HepG2 (cell line): ENCODE measurements at regions of chr9 and their contacts with region 1.

Region 1: GRCh38 chr9:35829084-35829763 is at the start of gene TMEM8B:
- DNase-seq: peak; percentile 83
- ATAC-seq: peak; percentile 90
- H3K4me3 ChIP-seq: peak within 1 kb of the TSS; percentile 61 to 81 (median 73)
- H3K27ac ChIP-seq: peak within 1 kb of the TSS; percentile 44
- H3K4me1 ChIP-seq: peaks cover 45% of the 10 kb centered on the region
- H3K27me3 ChIP-seq: no peaks in the 10 kb centered on the region
- CTCF ChIP-seq: no peak
- EP300 ChIP-seq: no peak
- POLR2A ChIP-seq: no peak
- RAD21 ChIP-seq: no peak
- total RNA-seq, gene TMEM8B: 1.5 and 2.1 TPM in 2 replicates

Region 2: GRCh38 chr9:35790385-35791296 is 38.6 kb before region 1 on chr9:
- CTCF ChIA-PET with region 1: interaction called, 12 read pairs
- POLR2A ChIA-PET with region 1: no interaction called
- in situ Hi-C with region 1: no loop called
- intact Hi-C with region 1: loop called (anchors 2 kb)
- DNase-seq: peak; percentile 49
- ATAC-seq: peak; percentile 94
- H3K4me3 ChIP-seq: no peak overlapping the region
- H3K27ac ChIP-seq: no peak overlapping the region
- H3K4me1 ChIP-seq: no peaks in the 10 kb centered on the region; the same call in 1 of the 2 replicates
- H3K27me3 ChIP-seq: no peaks in the 10 kb centered on the region
- CTCF ChIP-seq: peak; percentile 94
- EP300 ChIP-seq: no peak
- POLR2A ChIP-seq: no peak
- RAD21 ChIP-seq: peak; percentile 82

Region 3: GRCh38 chr9:35891646-35892045 is 62.4 kb after region 1 on chr9:
- CTCF ChIA-PET with region 1: no interaction called
- POLR2A ChIA-PET with region 1: no interaction called
- in situ Hi-C with region 1: no loop called
- intact Hi-C with region 1: no loop called
- DNase-seq: no peak
- ATAC-seq: no peak
- H3K4me3 ChIP-seq: no peak overlapping the region
- H3K27ac ChIP-seq: no peak overlapping the region
- H3K4me1 ChIP-seq: no peaks in the 10 kb centered on the region
- H3K27me3 ChIP-seq: peaks cover 0 to 4% of the 10 kb centered on the region in 2 experiments; a peak in 1 of 5 replicates
- CTCF ChIP-seq: no peak
- EP300 ChIP-seq: no peak
- POLR2A ChIP-seq: no peak
- RAD21 ChIP-seq: no peak

Region 4: DNA sequence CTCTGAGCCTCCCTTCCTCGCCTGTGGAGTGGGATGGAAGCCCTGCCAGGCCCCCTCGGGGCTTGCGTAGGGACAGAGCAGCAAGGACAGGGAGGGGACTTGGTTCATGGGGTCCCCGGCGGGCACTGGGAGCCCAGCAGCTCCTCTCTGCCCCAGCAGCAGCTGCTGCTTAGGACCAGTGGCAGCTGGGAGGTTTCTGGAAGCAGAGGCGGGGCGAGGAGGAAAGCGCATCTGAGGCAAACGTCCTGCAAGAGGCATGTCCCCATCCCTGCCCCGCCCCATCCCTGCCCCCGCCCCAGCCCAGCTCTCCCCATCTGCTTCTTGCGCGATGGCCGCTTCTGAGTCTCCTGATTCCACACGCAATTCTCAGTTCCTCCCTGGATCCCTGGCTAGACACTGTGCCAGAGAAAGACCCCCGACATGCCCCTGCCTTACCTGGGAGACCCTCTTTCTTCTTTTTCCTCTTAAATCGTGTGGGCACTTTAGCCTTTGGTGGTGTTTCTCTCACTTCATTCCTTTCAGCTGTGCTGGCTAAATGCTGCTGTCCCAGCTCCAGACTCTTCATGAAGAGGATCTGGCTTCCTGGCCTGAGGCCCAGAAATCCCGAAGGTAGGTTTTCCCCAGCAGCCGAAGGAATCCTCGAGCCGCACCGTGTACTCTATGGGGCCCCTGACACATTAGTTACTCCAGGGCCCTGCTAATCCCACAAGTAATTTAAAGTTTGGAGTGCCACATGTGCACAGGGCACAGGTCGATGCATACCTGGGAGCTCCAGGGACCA is 133.1 kb after region 1 on chr9:
- CTCF ChIA-PET with region 1: no interaction called
- POLR2A ChIA-PET with region 1: no interaction called
- in situ Hi-C with region 1: no loop called
- intact Hi-C with region 1: no loop called
- DNase-seq: no peak
- ATAC-seq: no peak
- H3K4me3 ChIP-seq: no peak overlapping the region
- H3K27ac ChIP-seq: no peak overlapping the region
- H3K4me1 ChIP-seq: no peaks in the 10 kb centered on the region
- H3K27me3 ChIP-seq: peaks cover 0 to 33% of the 10 kb centered on the region in 2 experiments; a peak in 3 of 5 replicates
- CTCF ChIP-seq: no peak
- EP300 ChIP-seq: no peak
- POLR2A ChIP-seq: no peak
- RAD21 ChIP-seq: no peak

Region 5: GRCh38 chr9:36039696-36040095 is 210.5 kb after region 1 on chr9:
- CTCF ChIA-PET with region 1: no interaction called
- POLR2A ChIA-PET with region 1: no interaction called
- in situ Hi-C with region 1: no loop called
- intact Hi-C with region 1: no loop called
- DNase-seq: no peak
- ATAC-seq: no peak
- H3K4me3 ChIP-seq: no peak overlapping the region
- H3K27ac ChIP-seq: no peak overlapping the region
- H3K4me1 ChIP-seq: peaks cover 31% of the 10 kb centered on the region
- H3K27me3 ChIP-seq: no peaks in the 10 kb centered on the region; a peak in 1 of 5 replicates
- CTCF ChIP-seq: no peak
- EP300 ChIP-seq: no peak
- POLR2A ChIP-seq: no peak
- RAD21 ChIP-seq: no peak